Thyroid gland (tissue), 4 donors: ENCODE measurements at regions of chr21 and their contacts with region 1.

Region 1: DNA sequence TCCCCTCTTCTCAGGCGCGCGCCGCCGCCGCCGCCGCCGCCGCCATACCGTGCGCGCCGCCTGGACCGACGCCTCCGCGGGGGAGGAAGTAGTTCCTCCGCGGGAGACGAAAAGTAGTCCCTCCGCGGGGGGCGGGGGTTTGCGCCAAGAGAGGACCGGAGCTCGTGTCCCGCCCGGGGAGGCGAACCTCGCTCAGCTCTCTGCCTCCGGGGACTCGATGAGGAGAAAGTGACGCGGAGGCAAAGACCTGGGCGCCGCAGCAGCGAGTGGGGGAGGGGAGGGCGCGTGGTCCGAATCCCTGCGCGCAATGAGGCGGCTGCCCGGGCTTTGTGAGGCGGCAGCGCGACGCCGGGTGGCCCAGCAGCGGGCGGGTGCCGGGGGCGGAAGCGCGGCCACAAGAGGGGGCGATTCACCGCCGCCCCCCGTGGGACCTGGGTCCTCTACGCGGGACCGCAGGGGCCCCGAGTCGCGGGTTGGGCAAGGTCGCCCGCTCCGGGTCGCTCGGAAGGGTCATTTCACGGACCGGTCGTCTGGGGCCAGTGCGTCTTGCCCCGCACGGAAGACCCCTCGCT is at the start of gene BRWD1:
- DNase-seq: peak; percentile 73 to 76
- H3K4me3 ChIP-seq: peak within 1 kb of the TSS; percentile 85 to 98 (median 94)
- H3K27ac ChIP-seq: peak within 1 kb of the TSS; percentile 93 to 98 (median 97)
- H3K4me1 ChIP-seq: peaks cover 6 to 11% of the 10 kb centered on the region in 2 donors
- H3K27me3 ChIP-seq: no peaks in the 10 kb centered on the region
- CTCF ChIP-seq: peak in 3 of 6 experiments; percentile 18 to 34 (median 23)
- POLR2A ChIP-seq: peak; percentile 13 to 80
- total RNA-seq, gene BRWD1: 66.6 to 125 (median 85.3) TPM

Region 2: GRCh38 chr21:39263372-39263771 is 50.3 kb before region 1 on chr21:
- intact Hi-C with region 1: no loop called
- DNase-seq: no peak
- H3K4me3 ChIP-seq: no peak overlapping the region
- H3K27ac ChIP-seq: no peak overlapping the region
- H3K4me1 ChIP-seq: no peaks in the 10 kb centered on the region
- H3K27me3 ChIP-seq: no peaks in the 10 kb centered on the region
- CTCF ChIP-seq: no peak
- POLR2A ChIP-seq: no peak

Region 3: DNA sequence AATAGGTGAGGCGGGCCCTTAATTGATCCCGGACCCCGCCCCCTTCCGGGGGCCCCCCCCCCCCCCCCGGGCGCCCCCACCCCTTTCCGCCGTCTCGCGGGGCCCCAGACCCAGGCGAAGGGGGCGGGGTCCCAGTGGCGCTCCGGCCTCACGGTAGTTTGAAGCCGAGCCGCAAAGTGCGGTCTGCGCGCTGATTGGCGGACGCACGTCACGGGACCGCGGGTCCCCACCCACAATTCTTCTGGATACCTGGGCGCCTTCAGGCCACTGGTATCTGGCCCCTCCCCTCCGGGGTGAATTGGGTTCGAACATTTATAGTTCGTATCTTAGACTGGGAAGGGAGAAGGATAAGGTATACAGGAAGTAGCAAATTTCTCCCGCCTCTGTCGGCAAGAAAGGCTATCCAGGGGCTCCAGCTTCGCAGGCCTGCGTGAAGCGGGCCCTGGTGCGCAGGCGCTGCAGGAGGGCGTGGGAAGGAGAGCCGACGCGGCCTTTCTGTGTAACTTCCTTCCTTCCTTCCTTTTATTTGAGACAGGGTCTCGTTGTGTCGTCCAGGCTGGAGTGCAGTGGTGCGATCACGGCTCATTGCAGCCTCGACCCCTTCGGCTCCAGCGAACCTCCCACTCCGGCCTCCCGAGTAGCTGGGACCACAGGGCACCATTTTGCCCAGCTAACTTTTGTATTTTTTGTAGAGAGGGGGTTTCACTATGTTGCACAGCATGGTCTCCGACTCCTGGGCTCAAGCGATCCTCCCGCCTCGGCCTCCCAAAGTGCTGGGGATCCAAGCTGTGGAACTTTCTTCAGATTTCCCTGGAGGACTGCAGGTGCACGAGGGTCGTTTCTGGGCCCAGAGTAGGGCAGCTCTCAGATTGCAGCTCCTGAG is 35.8 kb after region 1 on chr21:
- intact Hi-C with region 1: loop called (anchors 2 kb)
- DNase-seq: peak; percentile 99
- H3K4me3 ChIP-seq: peak overlapping the region in 2 of 3 donors; percentile 7 to 64
- H3K27ac ChIP-seq: peak overlapping the region; percentile 52 to 83 (median 74)
- H3K4me1 ChIP-seq: peaks cover 5 to 6% of the 10 kb centered on the region in 2 donors
- H3K27me3 ChIP-seq: no peaks in the 10 kb centered on the region
- CTCF ChIP-seq: no peak
- POLR2A ChIP-seq: peak in 1 of 2 donors; percentile 25

Region 4: GRCh38 chr21:39373644-39374043 is 60.0 kb after region 1 on chr21:
- intact Hi-C with region 1: no loop called
- DNase-seq: no peak
- H3K4me3 ChIP-seq: no peak overlapping the region
- H3K27ac ChIP-seq: no peak overlapping the region
- H3K4me1 ChIP-seq: no peaks in the 10 kb centered on the region
- H3K27me3 ChIP-seq: no peaks in the 10 kb centered on the region
- CTCF ChIP-seq: peak in 4 of 6 experiments; percentile 11 to 33 (median 23)
- POLR2A ChIP-seq: no peak

Region 5: GRCh38 chr21:39388038-39388810 is 74.6 kb after region 1 on chr21:
- intact Hi-C with region 1: loop called (anchors 5 kb)
- DNase-seq: peak; percentile 89 to 92
- H3K4me3 ChIP-seq: peak overlapping the region in 2 of 3 donors; percentile 24 to 44
- H3K27ac ChIP-seq: peak overlapping the region in 2 of 3 donors; percentile 25 to 72
- H3K4me1 ChIP-seq: peaks cover 12 to 16% of the 10 kb centered on the region in 2 donors
- H3K27me3 ChIP-seq: no peaks in the 10 kb centered on the region
- CTCF ChIP-seq: peak; percentile 76 to 92 (median 86)
- POLR2A ChIP-seq: no peak

Region 6: GRCh38 chr21:39406065-39406464 is 92.4 kb after region 1 on chr21:
- intact Hi-C with region 1: no loop called
- DNase-seq: no peak
- H3K4me3 ChIP-seq: no peak overlapping the region
- H3K27ac ChIP-seq: no peak overlapping the region
- H3K4me1 ChIP-seq: no peaks in the 10 kb centered on the region
- H3K27me3 ChIP-seq: no peaks in the 10 kb centered on the region
- CTCF ChIP-seq: no peak
- POLR2A ChIP-seq: no peak

Region 7: DNA sequence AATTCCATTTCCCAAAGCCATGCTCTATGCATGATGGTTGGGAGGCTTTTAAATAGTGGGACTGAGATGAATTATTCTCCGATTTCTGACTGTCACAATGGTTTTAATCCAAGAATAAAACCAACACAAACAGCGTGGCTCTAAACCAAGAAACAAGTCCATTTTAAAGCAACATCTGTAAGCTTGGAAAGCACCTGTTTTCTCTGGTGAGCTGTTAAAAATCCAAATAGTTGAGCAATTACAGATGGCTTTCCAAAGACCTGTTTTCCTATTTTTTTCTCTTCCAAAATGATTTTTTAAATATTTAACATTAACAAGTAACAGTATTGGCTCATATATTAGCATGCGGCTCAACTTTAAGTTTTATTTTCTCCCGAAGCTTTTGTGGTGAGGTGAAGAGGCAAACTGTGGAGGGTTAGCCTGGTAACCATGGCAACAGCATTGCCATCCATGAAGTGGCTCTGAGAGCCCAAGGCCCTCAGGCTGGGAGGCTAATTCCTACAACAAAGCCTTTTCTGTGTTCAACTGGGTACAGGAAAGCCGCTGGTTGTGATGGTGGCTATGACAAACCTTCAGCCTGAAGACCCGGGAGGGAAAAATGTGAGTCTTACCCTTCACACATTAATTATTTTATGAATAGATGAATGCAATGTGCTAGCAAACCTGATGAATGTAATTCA is 242.4 kb after region 1 on chr21:
- intact Hi-C with region 1: no loop called
- DNase-seq: peak; percentile 39 to 51
- H3K4me3 ChIP-seq: no peak overlapping the region
- H3K27ac ChIP-seq: no peak overlapping the region
- H3K4me1 ChIP-seq: peaks cover 0 to 4% of the 10 kb centered on the region in 2 donors
- H3K27me3 ChIP-seq: no peaks in the 10 kb centered on the region
- CTCF ChIP-seq: no peak
- POLR2A ChIP-seq: no peak